Endothelial cell of umbilical vein (primary cell): ENCODE measurements at regions of chr4 and their contacts with region 1.

Region 1: DNA sequence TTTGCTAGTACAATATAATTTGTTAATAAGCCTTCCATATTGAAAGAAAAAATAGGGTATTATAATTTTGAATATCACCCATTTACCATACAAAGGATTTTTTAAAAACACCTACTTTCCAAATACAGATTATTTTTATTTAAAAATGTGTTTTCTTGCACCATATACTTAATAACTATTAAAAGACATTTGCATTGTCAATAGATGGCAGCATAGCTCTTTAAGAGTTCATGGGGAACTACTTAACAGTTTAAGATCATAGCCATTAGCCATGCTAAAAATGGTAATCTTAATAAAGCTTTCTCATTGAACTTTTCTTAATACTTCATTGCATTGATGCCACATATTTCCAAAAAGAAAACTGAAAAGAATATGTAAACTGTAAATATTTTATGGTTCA is 1995.9 kb downstream of the C4orf33 start:
- DNase-seq: peak; percentile 43
- H3K4me3 ChIP-seq: no peak overlapping the region
- H3K27ac ChIP-seq: no peak overlapping the region
- H3K4me1 ChIP-seq: no peaks in the 10 kb centered on the region
- H3K27me3 ChIP-seq: no peaks in the 10 kb centered on the region
- CTCF ChIP-seq: no peak
- POLR2A ChIP-seq: no peak

Region 2: GRCh38 chr4:131192318-131192717 is 100.4 kb after region 1 on chr4:
- CTCF ChIA-PET with region 1: no interaction called
- POLR2A ChIA-PET with region 1: no interaction called
- dilution Hi-C with region 1: no loop called
- intact Hi-C with region 1: no loop called
- DNase-seq: no peak
- H3K4me3 ChIP-seq: no peak overlapping the region
- H3K27ac ChIP-seq: no peak overlapping the region
- H3K4me1 ChIP-seq: no peaks in the 10 kb centered on the region
- H3K27me3 ChIP-seq: no peaks in the 10 kb centered on the region
- CTCF ChIP-seq: no peak
- POLR2A ChIP-seq: no peak

Region 3: DNA sequence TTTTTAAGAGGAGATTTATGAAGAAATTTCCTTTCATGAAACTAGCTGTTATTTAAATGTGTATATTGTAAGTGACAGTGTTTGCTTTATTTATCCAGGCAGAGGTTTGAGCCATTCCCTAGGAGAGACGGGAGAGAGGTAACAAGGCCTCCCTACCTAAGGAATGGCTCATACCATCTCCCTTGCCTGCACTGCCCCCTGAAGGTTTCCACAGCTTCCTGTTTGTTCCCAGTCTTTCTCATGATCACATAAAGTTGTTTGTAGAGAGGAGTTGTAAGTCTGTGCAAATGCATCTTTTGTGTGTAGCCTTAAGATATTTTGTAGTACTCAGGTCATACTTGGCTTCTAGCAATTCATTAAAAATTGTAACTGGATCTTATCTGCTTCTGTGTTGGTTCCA is 552.7 kb after region 1 on chr4:
- CTCF ChIA-PET with region 1: interaction called, 10 read pairs
- POLR2A ChIA-PET with region 1: no interaction called
- dilution Hi-C with region 1: no loop called
- intact Hi-C with region 1: no loop called
- DNase-seq: peak; percentile 32
- H3K4me3 ChIP-seq: no peak overlapping the region
- H3K27ac ChIP-seq: no peak overlapping the region
- H3K4me1 ChIP-seq: no peaks in the 10 kb centered on the region
- H3K27me3 ChIP-seq: no peaks in the 10 kb centered on the region
- CTCF ChIP-seq: peak; percentile 23 to 30
- POLR2A ChIP-seq: no peak

Region 4: DNA sequence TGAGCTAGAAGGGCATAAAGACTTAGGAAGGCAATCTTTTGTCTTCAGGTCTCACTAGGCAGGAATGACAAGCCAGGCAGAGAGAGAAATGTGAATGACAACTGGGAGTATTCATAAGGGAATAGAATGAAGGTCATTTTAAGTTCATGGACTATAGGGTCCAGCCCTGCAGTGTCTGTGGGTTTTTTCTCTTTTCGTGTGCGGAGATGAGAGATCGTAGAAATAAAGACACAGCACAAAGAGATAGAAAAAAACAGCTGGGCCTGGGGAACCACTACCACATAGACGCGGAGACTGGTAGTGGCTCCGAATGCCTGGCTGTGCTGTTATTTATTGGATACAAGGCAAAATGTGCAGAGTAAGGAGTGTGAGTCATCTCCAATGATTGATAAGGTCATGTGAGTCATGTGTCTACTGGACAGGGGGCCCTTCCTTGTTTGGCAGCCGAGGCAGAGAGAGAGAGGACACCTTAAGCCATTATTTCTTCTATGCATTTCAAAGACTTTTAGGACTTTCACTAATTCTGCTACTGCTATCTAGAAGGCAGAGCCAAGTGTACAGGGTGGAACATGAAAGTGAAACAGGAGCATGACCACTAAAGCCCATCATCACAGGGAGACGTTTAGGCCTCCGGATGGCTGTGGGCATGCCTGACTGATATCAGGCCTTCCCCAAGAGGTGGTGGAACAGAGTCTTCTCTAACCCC is 1135.4 kb after region 1 on chr4:
- CTCF ChIA-PET with region 1: interaction called, 6 read pairs
- POLR2A ChIA-PET with region 1: no interaction called
- dilution Hi-C with region 1: no loop called
- intact Hi-C with region 1: loop called (anchors 5 kb)
- DNase-seq: peak; percentile 19
- H3K4me3 ChIP-seq: peak overlapping the region in 1 of 3 experiments; percentile 22
- H3K27ac ChIP-seq: no peak overlapping the region
- H3K4me1 ChIP-seq: no peaks in the 10 kb centered on the region
- H3K27me3 ChIP-seq: no peaks in the 10 kb centered on the region
- CTCF ChIP-seq: no peak
- POLR2A ChIP-seq: no peak

Region 5: GRCh38 chr4:132614682-132615081 is 1522.8 kb after region 1 on chr4:
- CTCF ChIA-PET with region 1: interaction called, 8 read pairs
- POLR2A ChIA-PET with region 1: no interaction called
- dilution Hi-C with region 1: no loop called
- intact Hi-C with region 1: loop called (anchors 10 kb)
- DNase-seq: peak; percentile 19
- H3K4me3 ChIP-seq: no peak overlapping the region
- H3K27ac ChIP-seq: no peak overlapping the region
- H3K4me1 ChIP-seq: no peaks in the 10 kb centered on the region
- H3K27me3 ChIP-seq: no peaks in the 10 kb centered on the region
- CTCF ChIP-seq: peak; percentile 13 to 18
- POLR2A ChIP-seq: no peak

Region 6: GRCh38 chr4:132642016-132642817 is 1550.3 kb after region 1 on chr4:
- CTCF ChIA-PET with region 1: interaction called, 5 read pairs
- POLR2A ChIA-PET with region 1: no interaction called
- dilution Hi-C with region 1: no loop called
- intact Hi-C with region 1: loop called (anchors 5 kb)
- DNase-seq: peak; percentile 74
- H3K4me3 ChIP-seq: no peak overlapping the region
- H3K27ac ChIP-seq: no peak overlapping the region
- H3K4me1 ChIP-seq: no peaks in the 10 kb centered on the region
- H3K27me3 ChIP-seq: peaks cover 0 to 1% of the 10 kb centered on the region in 2 experiments
- CTCF ChIP-seq: peak; percentile 76 to 77
- POLR2A ChIP-seq: no peak